ENCODE measurements at regions of chrX and their contacts with region 1.

Region 1: DNA sequence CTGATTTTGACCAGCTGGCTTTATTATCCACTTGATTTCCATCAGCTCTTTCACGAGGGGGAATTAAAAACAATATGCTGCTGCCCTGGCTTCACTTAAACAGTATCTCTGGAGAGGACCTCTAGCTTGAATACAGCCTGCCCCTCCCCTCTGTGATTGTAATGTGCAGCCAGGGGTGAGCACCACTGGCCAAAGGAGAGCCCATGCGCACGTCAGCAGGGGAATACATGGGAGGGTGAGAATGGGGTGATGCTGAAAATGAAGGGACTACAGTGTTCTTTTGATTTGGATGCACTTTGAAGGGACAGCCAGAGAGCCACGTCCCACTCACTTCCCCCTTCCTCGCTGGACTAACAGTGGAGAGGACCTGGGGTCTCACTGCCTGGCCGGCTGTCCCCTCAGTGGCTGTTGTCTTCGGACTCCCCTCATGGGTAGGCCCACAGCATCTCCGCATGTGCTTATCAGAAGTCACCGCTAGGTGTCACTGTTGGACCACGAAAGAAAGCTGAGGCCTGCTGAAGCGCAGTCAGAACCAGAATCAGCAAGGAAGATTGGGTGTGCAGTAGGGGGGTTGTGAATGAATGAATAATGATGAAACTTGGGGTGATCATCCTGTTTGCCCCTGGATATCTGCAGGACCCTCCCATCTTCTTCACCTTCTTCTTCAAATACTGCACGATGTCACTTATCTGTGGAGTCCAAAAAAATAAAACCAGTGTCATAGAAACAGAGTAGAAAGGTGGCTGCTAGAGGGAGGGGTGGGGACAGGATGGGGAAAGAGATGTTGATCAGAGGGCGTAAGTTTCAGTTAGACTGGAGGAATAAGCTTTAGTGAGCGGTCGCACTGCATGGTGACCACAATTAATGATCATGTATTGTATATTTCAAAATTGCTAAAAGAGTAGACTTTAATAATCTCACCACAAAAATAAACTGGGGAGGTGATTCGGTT is 32.8 kb downstream of the CLCN4 start:
- DNase-seq: peak; percentile 78
- H3K4me3 Mint-ChIP-seq: no peak overlapping the region
- H3K27ac Mint-ChIP-seq: no peak overlapping the region
- H3K4me1 Mint-ChIP-seq: no peaks in the 10 kb centered on the region
- H3K27me3 Mint-ChIP-seq: peaks cover 26% of the 10 kb centered on the region
- CTCF ChIP-seq: peak; percentile 83

Region 2: DNA sequence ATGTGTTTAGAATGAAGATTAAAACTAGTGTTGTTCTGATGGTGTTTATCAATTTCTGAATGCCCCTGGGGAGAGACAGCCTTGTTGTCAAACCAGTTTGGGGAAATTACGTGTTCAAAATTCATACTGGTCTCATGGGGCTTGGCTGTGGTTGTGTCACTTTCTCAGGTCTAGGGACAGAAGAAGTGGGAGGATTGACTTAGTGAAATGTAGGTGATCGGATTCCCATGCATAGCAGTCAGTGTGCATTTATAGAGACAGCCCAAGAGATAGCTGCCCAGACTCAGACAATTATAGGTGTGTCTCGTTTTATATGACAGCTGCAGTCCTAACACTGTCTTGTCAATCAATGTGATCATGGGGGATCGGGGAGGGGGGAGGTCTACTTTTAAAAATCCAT is 127.2 kb before region 1 on chrX:
- CTCF ChIA-PET with region 1: no interaction called
- POLR2A ChIA-PET with region 1: no interaction called
- intact Hi-C with region 1: no loop called
- DNase-seq: no peak
- H3K4me3 Mint-ChIP-seq: no peak overlapping the region
- H3K27ac Mint-ChIP-seq: no peak overlapping the region
- H3K4me1 Mint-ChIP-seq: no peaks in the 10 kb centered on the region
- H3K27me3 Mint-ChIP-seq: peaks cover 15% of the 10 kb centered on the region
- CTCF ChIP-seq: no peak

Region 3: DNA sequence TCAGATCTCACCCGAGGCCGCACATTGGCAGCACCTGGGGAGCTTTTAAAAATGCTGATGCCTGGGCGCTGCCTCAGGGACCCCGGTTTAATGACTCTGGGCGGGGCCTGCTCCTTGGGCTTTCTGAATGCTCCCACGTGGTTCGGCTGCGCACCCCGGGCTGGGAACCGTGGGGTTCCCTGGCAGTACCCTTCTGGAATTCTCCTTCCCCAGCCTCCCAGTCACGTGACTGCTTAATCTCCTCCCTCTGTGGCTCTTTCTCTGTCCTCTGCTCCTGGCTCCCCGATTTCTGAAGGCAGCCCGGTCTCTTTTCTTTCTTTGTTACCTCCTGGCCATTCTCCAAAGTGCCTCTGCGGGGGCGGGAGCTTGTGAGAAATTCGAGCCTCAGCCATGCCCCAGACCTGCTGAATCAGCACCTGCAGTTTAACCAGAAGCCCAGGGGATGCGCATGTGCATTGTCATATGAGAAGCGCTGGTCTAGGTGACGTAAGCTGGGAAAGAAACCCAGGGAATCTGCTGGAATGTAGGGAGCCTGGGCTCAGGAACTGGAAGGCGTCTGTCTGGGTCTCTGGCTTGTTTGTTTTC is 16.2 kb before region 1 on chrX:
- CTCF ChIA-PET with region 1: interaction called, 84 read pairs
- POLR2A ChIA-PET with region 1: no interaction called
- intact Hi-C with region 1: no loop called
- DNase-seq: peak; percentile 97
- H3K4me3 Mint-ChIP-seq: peak overlapping the region; percentile 61
- H3K27ac Mint-ChIP-seq: peak overlapping the region; percentile 20
- H3K4me1 Mint-ChIP-seq: peaks cover 32% of the 10 kb centered on the region
- H3K27me3 Mint-ChIP-seq: peaks cover 24% of the 10 kb centered on the region
- CTCF ChIP-seq: no peak

Region 4: GRCh38 chrX:10223276-10223675 is 33.7 kb after region 1 on chrX:
- CTCF ChIA-PET with region 1: interaction called, 13 read pairs
- POLR2A ChIA-PET with region 1: no interaction called
- intact Hi-C with region 1: no loop called
- DNase-seq: no peak
- H3K4me3 Mint-ChIP-seq: no peak overlapping the region
- H3K27ac Mint-ChIP-seq: no peak overlapping the region
- H3K4me1 Mint-ChIP-seq: no peaks in the 10 kb centered on the region
- H3K27me3 Mint-ChIP-seq: no peaks in the 10 kb centered on the region
- CTCF ChIP-seq: no peak

Region 5: GRCh38 chrX:10597871-10598270 is 408.3 kb after region 1 on chrX:
- CTCF ChIA-PET with region 1: interaction called, 32 read pairs
- POLR2A ChIA-PET with region 1: no interaction called
- intact Hi-C with region 1: loop called (anchors 1 kb)
- DNase-seq: peak; percentile 61
- H3K4me3 Mint-ChIP-seq: no peak overlapping the region
- H3K27ac Mint-ChIP-seq: no peak overlapping the region
- H3K4me1 Mint-ChIP-seq: no peaks in the 10 kb centered on the region
- H3K27me3 Mint-ChIP-seq: no peaks in the 10 kb centered on the region
- CTCF ChIP-seq: peak; percentile 71

Region 6: GRCh38 chrX:10636337-10636736 is 446.7 kb after region 1 on chrX:
- CTCF ChIA-PET with region 1: interaction called, 82 read pairs
- POLR2A ChIA-PET with region 1: interaction called, 18 read pairs
- intact Hi-C with region 1: loop called (anchors 1 kb)
- DNase-seq: peak; percentile 72
- H3K4me3 Mint-ChIP-seq: peak overlapping the region; percentile 52
- H3K27ac Mint-ChIP-seq: no peak overlapping the region
- H3K4me1 Mint-ChIP-seq: peaks cover 33% of the 10 kb centered on the region
- H3K27me3 Mint-ChIP-seq: peaks cover 20% of the 10 kb centered on the region
- CTCF ChIP-seq: peak; percentile 79

Region 7: GRCh38 chrX:10769195-10769594 is 579.6 kb after region 1 on chrX:
- CTCF ChIA-PET with region 1: interaction called, 20 read pairs
- POLR2A ChIA-PET with region 1: no interaction called
- intact Hi-C with region 1: no loop called
- DNase-seq: peak; percentile 39
- H3K4me3 Mint-ChIP-seq: no peak overlapping the region
- H3K27ac Mint-ChIP-seq: no peak overlapping the region
- H3K4me1 Mint-ChIP-seq: no peaks in the 10 kb centered on the region
- H3K27me3 Mint-ChIP-seq: peaks cover 25% of the 10 kb centered on the region
- CTCF ChIP-seq: peak; percentile 49

Region 8: DNA sequence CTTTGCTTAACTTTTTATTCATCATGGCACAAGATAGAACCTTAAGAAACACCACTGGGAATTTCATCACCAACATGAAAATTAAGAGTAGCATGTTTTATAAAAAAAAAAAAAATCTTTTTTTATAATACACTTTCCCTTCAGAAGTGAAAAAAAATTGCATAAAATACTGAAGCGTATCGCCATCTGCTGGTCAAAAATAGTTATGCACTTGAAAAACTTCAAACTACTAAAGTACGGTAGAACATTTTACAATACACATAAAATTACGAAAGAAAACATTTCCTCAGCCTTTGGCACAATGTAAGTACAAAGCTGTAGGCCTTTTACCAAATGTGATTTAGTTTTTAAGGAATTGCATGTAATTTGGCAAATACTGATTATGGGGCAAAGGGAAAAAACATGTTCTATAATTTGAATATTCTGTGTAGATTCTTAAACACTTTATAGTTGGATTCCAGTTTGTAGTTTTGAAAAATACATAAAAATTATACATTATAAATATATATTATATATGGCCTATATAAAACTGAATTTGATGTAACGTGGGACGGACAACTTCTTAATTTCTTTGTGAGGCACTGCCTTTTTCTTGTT is 948.0 kb after region 1 on chrX:
- CTCF ChIA-PET with region 1: interaction called, 98 read pairs
- POLR2A ChIA-PET with region 1: no interaction called
- intact Hi-C with region 1: loop called (anchors 1 kb)
- DNase-seq: peak; percentile 49
- H3K4me3 Mint-ChIP-seq: no peak overlapping the region
- H3K27ac Mint-ChIP-seq: no peak overlapping the region
- H3K4me1 Mint-ChIP-seq: no peaks in the 10 kb centered on the region
- H3K27me3 Mint-ChIP-seq: peaks cover 32% of the 10 kb centered on the region
- CTCF ChIP-seq: peak; percentile 49